T-cell (primary cell): ENCODE measurements at regions of chr5 and their contacts with region 1.

Region 1: DNA sequence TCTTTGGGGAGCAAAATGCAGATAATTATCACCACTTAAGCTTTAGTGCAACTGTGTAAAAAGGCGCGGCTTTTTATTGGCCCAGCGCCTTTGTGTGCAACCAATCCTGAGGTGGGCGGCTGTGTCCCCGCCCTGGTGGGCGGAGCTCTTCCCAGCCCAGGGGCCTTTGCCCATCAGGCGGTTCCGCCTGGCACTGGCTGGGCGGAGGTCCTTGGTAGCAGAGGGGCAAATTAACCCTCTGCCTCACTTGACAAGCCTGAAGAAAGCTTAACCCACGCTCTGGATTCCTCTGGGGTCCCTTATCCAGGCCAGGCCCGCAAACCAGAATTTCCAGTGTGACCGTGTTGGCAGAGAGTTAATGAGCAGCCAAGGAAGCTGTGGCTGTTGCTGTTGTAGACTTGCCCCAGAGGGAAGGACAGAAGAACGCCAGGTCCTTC is 12.8 kb upstream of the NIPAL4 start:
- DNase-seq: no peak
- ATAC-seq: no peak
- H3K4me3 ChIP-seq: no peak overlapping the region
- H3K4me3 Mint-ChIP-seq: no peak overlapping the region
- H3K27ac ChIP-seq: no peak overlapping the region
- H3K27ac Mint-ChIP-seq: no peak overlapping the region
- H3K4me1 ChIP-seq: no peaks in the 10 kb centered on the region
- H3K4me1 Mint-ChIP-seq: no peaks in the 10 kb centered on the region
- H3K27me3 ChIP-seq: no peaks in the 10 kb centered on the region
- H3K27me3 Mint-ChIP-seq: no peaks in the 10 kb centered on the region

Region 2: GRCh38 chr5:157471709-157472108 is 24.5 kb after region 1 on chr5:
- CTCF ChIA-PET with region 1: no interaction called
- POLR2A ChIA-PET with region 1: interaction called in 1 of 2 experiments, 11 read pairs
- DNase-seq: no peak
- ATAC-seq: no peak
- H3K4me3 ChIP-seq: no peak overlapping the region
- H3K4me3 Mint-ChIP-seq: no peak overlapping the region
- H3K27ac ChIP-seq: no peak overlapping the region
- H3K27ac Mint-ChIP-seq: no peak overlapping the region
- H3K4me1 ChIP-seq: no peaks in the 10 kb centered on the region
- H3K4me1 Mint-ChIP-seq: no peaks in the 10 kb centered on the region
- H3K27me3 ChIP-seq: no peaks in the 10 kb centered on the region
- H3K27me3 Mint-ChIP-seq: no peaks in the 10 kb centered on the region

Region 3: GRCh38 chr5:157502143-157502647 is 55.0 kb after region 1 on chr5:
- CTCF ChIA-PET with region 1: no interaction called
- POLR2A ChIA-PET with region 1: no interaction called
- DNase-seq: peak in 1 of 35 experiments; percentile 14
- ATAC-seq: no peak
- H3K4me3 ChIP-seq: no peak overlapping the region
- H3K4me3 Mint-ChIP-seq: no peak overlapping the region
- H3K27ac ChIP-seq: no peak overlapping the region
- H3K27ac Mint-ChIP-seq: peak overlapping the region in 1 of 2 donors; percentile 76
- H3K4me1 ChIP-seq: peaks cover 2 to 4% of the 10 kb centered on the region in 2 experiments
- H3K4me1 Mint-ChIP-seq: peaks cover 4 to 45% (median 6%) of the 10 kb centered on the region in 3 donors
- H3K27me3 ChIP-seq: no peaks in the 10 kb centered on the region
- H3K27me3 Mint-ChIP-seq: no peaks in the 10 kb centered on the region

Region 4: GRCh38 chr5:157731272-157732129 is 284.3 kb after region 1 on chr5 and contains the start of gene THG1L:
- CTCF ChIA-PET with region 1: no interaction called
- POLR2A ChIA-PET with region 1: no interaction called
- DNase-seq: peak; percentile 90 to 99 (median 95)
- ATAC-seq: peak; percentile 96 to 97 (median 96)
- H3K4me3 ChIP-seq: peak within 1 kb of the TSS; percentile 82 to 86
- H3K4me3 Mint-ChIP-seq: peak within 1 kb of the TSS; percentile 93 to 97 (median 96)
- H3K27ac ChIP-seq: peak within 1 kb of the TSS; percentile 78
- H3K27ac Mint-ChIP-seq: peak within 1 kb of the TSS; percentile 96 to 97
- H3K4me1 ChIP-seq: peaks cover 0 to 13% of the 10 kb centered on the region in 2 experiments
- H3K4me1 Mint-ChIP-seq: peaks cover 14 to 29% (median 25%) of the 10 kb centered on the region in 3 donors
- H3K27me3 ChIP-seq: no peaks in the 10 kb centered on the region
- H3K27me3 Mint-ChIP-seq: no peaks in the 10 kb centered on the region
- total RNA-seq, gene THG1L: 8.9 to 10.9 (median 9.4) TPM

Region 5: GRCh38 chr5:158995694-158996173 is 1548.5 kb after region 1 on chr5:
- CTCF ChIA-PET with region 1: no interaction called
- POLR2A ChIA-PET with region 1: no interaction called
- DNase-seq: no peak
- ATAC-seq: no peak
- H3K4me3 ChIP-seq: no peak overlapping the region
- H3K4me3 Mint-ChIP-seq: no peak overlapping the region
- H3K27ac ChIP-seq: no peak overlapping the region
- H3K27ac Mint-ChIP-seq: no peak overlapping the region
- H3K4me1 ChIP-seq: peaks cover 0 to 3% of the 10 kb centered on the region in 2 experiments
- H3K4me1 Mint-ChIP-seq: peaks cover 0 to 2% (median 2%) of the 10 kb centered on the region in 3 donors
- H3K27me3 ChIP-seq: peaks cover 0 to 4% of the 10 kb centered on the region in 2 experiments
- H3K27me3 Mint-ChIP-seq: peaks cover 0 to 6% of the 10 kb centered on the region in 2 donors